Ascending aorta (tissue), 2 donors: ENCODE measurements at regions of chr16 and their contacts with region 1.

Region 1: GRCh38 chr16:75519881-75520280 is 16.0 kb downstream of the CHST5 start:
- DNase-seq: no peak
- H3K4me3 ChIP-seq: no peak overlapping the region
- H3K27ac ChIP-seq: no peak overlapping the region
- H3K4me1 ChIP-seq: peaks cover 0 to 3% of the 10 kb centered on the region in 2 donors
- H3K27me3 ChIP-seq: no peaks in the 10 kb centered on the region
- CTCF ChIP-seq: no peak

Region 2: DNA sequence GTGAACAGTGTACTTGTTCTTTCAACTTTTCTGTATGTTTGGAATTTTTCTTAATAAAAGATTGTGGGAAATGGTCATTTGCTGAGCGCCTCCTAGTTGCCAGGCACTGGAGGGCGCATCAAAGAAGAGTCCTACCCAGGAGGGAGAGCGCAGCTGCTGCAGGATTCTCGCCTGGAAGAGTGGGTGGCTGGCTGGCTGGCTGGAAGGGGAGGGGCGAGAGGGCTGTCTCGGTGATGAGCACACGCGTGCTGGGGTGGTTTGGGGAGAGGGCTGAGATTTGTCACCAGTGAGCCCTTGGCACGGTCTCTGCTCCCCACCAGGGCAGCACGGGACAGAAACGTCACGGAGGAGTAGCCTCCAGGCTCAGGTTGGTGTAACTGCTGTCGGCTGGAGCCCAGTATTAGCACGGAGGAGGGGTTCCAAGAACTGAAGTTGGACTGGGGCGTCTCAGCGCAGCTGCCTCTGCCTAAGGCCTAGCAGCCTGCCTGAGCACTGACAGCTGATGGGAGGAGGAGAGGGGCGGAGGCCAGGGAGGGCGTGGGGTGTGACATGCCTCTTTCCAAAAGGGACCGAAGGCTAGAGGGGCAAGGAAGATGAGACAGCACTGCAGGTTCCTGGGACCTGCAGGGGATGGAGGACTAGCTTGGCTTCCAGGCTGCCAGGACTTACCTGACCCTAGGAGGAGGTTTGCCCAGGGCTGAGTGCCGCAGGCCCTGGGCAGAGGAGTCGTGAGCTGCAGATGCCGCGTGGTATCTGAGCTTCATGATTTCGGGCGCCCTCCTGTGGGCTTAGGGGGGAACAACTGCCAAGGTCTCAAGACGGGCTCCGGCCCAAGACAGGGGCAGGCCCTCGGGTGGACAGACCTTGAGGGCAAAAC is 409.0 kb before region 1 on chr16:
- intact Hi-C with region 1: no loop called
- DNase-seq: peak; percentile 69 to 95
- H3K4me3 ChIP-seq: peak overlapping the region in 1 of 2 donors; percentile 47
- H3K27ac ChIP-seq: peak overlapping the region; percentile 72 to 83
- H3K4me1 ChIP-seq: peaks cover 8 to 39% of the 10 kb centered on the region in 2 donors
- H3K27me3 ChIP-seq: no peaks in the 10 kb centered on the region
- CTCF ChIP-seq: peak; percentile 88 to 91 (median 90)

Region 3: GRCh38 chr16:75148311-75149195 is 371.3 kb before region 1 on chr16 and contains the start of gene ZFP1:
- intact Hi-C with region 1: loop called (anchors 1 kb)
- DNase-seq: peak; percentile 83 to 98
- H3K4me3 ChIP-seq: peak within 1 kb of the TSS; percentile 99 to 100
- H3K27ac ChIP-seq: peak within 1 kb of the TSS; percentile 93 to 99
- H3K4me1 ChIP-seq: peaks cover 0 to 6% of the 10 kb centered on the region in 2 donors
- H3K27me3 ChIP-seq: no peaks in the 10 kb centered on the region
- CTCF ChIP-seq: no peak
- total RNA-seq, gene ZFP1: 6.8 TPM

Region 4: DNA sequence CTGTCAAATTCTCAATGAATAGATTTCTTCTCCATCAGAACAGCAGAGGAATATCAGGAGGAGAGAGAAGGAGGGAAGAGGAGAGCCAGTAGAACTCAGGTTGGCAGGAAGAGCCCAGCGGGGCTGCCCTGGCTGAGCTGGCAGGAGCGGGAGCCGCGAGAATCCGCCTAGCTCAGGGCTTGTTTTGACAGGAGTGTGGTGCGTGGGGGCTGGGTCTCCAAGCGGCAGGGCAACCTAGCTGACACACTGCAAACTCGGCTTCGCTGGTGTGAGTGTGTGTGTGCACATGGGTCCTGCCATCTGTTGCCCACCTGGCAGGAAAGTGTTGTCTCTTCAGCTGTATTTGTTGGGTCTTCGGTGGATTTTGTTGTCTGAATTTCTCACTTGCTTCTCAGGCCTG is 240.6 kb before region 1 on chr16:
- intact Hi-C with region 1: no loop called
- DNase-seq: no peak
- H3K4me3 ChIP-seq: no peak overlapping the region
- H3K27ac ChIP-seq: no peak overlapping the region
- H3K4me1 ChIP-seq: peaks cover 0 to 5% of the 10 kb centered on the region in 2 donors
- H3K27me3 ChIP-seq: no peaks in the 10 kb centered on the region
- CTCF ChIP-seq: no peak

Region 5: GRCh38 chr16:75471723-75472633 is 47.9 kb before region 1 on chr16:
- intact Hi-C with region 1: loop called (anchors 1 kb)
- DNase-seq: peak in 1 of 2 donors; percentile 75
- H3K4me3 ChIP-seq: no peak overlapping the region
- H3K27ac ChIP-seq: no peak overlapping the region
- H3K4me1 ChIP-seq: no peaks in the 10 kb centered on the region
- H3K27me3 ChIP-seq: no peaks in the 10 kb centered on the region
- CTCF ChIP-seq: peak; percentile 76 to 83 (median 79)

Region 6: GRCh38 chr16:75555707-75556430 is 36.0 kb after region 1 on chr16 and contains the start of gene TMEM231:
- intact Hi-C with region 1: loop called (anchors 1 kb)
- DNase-seq: peak; percentile 91 to 99
- H3K4me3 ChIP-seq: peak within 1 kb of the TSS; percentile 64 to 84
- H3K27ac ChIP-seq: peak within 1 kb of the TSS; percentile 63 to 80
- H3K4me1 ChIP-seq: peaks cover 0 to 5% of the 10 kb centered on the region in 2 donors
- H3K27me3 ChIP-seq: no peaks in the 10 kb centered on the region
- CTCF ChIP-seq: no peak
- total RNA-seq, gene TMEM231: 59.9 TPM

Region 7: GRCh38 chr16:75593825-75594820 is 74.2 kb after region 1 on chr16:
- intact Hi-C with region 1: loop called (anchors 2 kb)
- DNase-seq: no peak
- H3K4me3 ChIP-seq: no peak overlapping the region
- H3K27ac ChIP-seq: peak overlapping the region; percentile 8 to 35
- H3K4me1 ChIP-seq: peaks cover 4 to 14% of the 10 kb centered on the region in 2 donors
- H3K27me3 ChIP-seq: no peaks in the 10 kb centered on the region
- CTCF ChIP-seq: no peak